ENCODE measurements at regions of chr6 and their contacts with region 1.

Region 1: DNA sequence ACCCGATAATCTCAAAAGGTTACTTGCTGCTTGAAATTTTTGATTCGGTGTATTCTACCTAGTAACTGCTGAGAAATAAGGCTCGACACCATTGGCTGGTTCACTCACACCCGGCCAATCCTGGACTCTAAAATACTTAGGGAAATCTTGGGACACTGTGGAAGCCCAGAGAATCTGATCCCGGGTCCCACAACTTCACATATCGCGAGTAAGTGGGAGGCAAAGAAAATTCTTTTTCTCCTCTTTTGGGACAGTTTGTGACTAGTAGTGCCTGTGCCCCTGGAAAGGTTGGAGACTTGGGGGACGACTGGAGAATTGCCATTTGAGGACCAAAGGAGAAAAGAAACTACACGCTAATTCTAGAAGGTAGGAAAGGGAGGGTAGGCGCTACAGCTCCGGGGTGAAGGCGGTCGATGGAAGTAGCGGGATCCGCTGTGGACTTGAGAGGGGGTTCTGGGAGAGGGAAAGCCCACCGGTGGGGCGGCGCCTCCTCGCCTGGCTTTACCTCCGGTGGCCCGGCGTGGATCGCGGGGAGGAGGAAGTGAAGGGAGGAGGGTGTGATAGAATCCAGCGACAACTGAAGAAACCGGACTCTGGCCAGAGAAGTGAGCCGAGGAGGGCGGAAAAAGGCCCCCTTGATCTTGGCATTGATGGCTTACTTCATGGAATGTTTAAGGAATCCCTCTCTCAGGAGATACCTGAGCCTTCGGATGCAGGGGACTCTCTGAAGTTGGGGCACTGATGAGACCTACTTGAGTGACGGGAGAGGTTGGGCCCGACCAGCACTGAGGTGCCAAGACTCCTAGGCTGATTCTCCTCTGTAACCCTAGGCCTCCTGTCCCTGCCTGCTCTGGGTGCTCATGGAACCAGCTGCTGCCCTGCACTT is 18.8 kb upstream of the BTN3A3 start:
- DNase-seq: peak; percentile 93
- ATAC-seq: peak; percentile 99
- H3K4me3 ChIP-seq: peak overlapping the region; percentile 79 to 85 (median 80)
- H3K27ac ChIP-seq: peak overlapping the region; percentile 60
- H3K4me1 ChIP-seq: peaks cover 48% of the 10 kb centered on the region
- H3K27me3 ChIP-seq: no peaks in the 10 kb centered on the region; a peak in 1 of 5 replicates
- CTCF ChIP-seq: peak; percentile 18; the same call in 1 of the 2 replicates
- EP300 ChIP-seq: no peak
- POLR2A ChIP-seq: peak; percentile 46 to 69
- RAD21 ChIP-seq: peak; percentile 26; the same call in 1 of the 2 replicates

Region 2: GRCh38 chr6:26389349-26389894 is 32.1 kb before region 1 on chr6:
- CTCF ChIA-PET with region 1: interaction called, 3 read pairs
- POLR2A ChIA-PET with region 1: no interaction called
- in situ Hi-C with region 1: no loop called
- intact Hi-C with region 1: loop called (anchors 2 kb)
- DNase-seq: no peak
- ATAC-seq: no peak
- H3K4me3 ChIP-seq: no peak overlapping the region
- H3K27ac ChIP-seq: no peak overlapping the region
- H3K4me1 ChIP-seq: peaks cover 22% of the 10 kb centered on the region
- H3K27me3 ChIP-seq: no peaks in the 10 kb centered on the region
- CTCF ChIP-seq: no peak
- EP300 ChIP-seq: no peak
- POLR2A ChIP-seq: no peak
- RAD21 ChIP-seq: no peak

Region 3: GRCh38 chr6:28322661-28323060 is 1901.2 kb after region 1 on chr6:
- CTCF ChIA-PET with region 1: no interaction called
- POLR2A ChIA-PET with region 1: no interaction called
- in situ Hi-C with region 1: no loop called
- intact Hi-C with region 1: no loop called
- DNase-seq: peak; percentile 62
- ATAC-seq: peak; percentile 12; the same call in 1 of the 3 replicates
- H3K4me3 ChIP-seq: no peak overlapping the region
- H3K27ac ChIP-seq: no peak overlapping the region
- H3K4me1 ChIP-seq: peaks cover 36% of the 10 kb centered on the region
- H3K27me3 ChIP-seq: no peaks in the 10 kb centered on the region
- CTCF ChIP-seq: no peak
- EP300 ChIP-seq: peak in 1 of 2 experiments; percentile 59; a peak in 2 of 4 replicates
- POLR2A ChIP-seq: no peak
- RAD21 ChIP-seq: no peak

Measured in HepG2 (cell line).